ENCODE measurements at regions of chr1 and their contacts with region 1.

Region 1: GRCh38 chr1:65958561-65959350 is 166.1 kb downstream of the PDE4B start:
- DNase-seq: no peak

Region 2: GRCh38 chr1:65235867-65236805 is 722.6 kb before region 1 on chr1:
- intact Hi-C with region 1: loop called (anchors 10 kb)
- DNase-seq: no peak

Region 3: DNA sequence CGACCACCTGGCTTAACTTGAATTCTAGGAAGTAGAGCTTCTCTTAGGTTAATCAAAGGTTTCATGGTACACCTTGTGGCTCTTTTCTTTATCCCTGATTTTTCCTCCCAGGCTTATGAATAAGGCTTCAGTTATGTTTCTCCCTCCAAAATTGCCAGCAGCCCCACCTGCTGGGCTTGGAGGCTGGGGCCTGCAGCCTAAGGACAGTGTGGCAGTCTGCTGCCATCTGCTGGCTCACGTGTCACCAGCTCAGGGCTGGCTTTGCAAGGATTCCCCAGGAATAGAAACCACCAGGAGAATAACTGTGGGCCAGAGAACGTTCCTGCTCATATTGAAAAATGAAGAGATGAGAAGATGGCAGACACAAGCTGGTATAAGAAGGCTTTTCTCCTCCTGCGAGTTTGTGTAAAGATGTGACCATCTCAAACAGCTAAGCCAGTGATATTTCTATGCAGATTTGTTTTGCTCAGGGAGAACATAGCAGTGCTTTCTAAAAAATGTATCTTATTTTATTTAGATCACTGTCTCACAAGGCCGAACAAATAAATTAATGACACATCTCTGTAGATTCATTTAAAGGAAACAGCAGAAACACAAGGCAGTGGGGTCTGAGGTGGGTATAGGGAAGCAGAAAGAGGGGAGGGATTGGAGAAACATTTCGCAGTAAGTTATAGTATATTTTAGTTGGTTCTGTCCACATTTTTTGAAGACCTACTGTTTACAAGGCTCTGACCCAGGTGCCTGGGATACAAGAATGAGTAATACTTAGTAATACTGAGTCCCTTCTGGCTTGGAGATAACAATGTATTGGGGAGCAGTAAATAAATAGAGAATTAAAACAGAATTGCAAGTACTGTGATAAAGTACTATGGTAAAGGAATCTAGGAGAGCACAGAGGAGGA is 284.1 kb after region 1 on chr1:
- intact Hi-C with region 1: loop called (anchors 1 kb)
- DNase-seq: peak; percentile 80 to 98 (median 90)

Region 4: DNA sequence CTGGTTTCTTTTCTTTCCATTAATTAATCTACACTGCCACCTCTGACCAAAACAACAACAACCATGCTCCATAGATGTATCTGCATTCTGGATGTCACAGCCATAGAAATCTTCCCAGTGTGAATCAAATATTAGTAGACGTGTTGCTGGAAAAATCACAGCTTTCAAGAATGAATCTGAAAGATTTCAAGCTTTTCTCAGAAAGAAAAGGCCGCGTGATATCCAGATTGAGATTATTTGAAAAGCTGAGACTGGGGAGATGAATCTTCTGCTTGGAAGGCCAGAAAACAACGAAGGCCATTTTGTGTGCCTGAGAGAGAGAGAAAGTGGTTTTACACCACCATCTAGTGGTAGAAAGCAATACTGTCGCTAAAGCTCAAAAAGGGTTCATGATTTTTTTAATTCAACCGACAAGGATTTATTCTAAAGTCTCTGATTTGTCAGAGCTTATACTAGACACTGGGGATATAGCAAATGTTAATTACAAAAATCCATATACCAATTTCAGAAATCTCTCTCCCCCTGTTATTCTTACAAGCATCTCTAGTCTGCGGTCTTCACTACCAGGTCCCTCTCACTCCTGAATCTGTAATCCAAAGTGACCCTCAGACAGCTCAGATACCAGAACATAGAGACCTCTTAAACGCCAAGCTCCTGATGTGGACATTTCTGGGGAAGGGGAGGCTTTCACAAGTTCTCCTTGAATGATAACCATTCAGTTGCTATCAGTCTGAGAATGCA is 487.7 kb after region 1 on chr1:
- intact Hi-C with region 1: loop called (anchors 2 kb)
- DNase-seq: peak in 1 of 10 donors; percentile 11

Measured in posterior cingulate gyrus (tissue), 11 donors.